B cell (primary cell): ENCODE measurements at regions of chr16 and their contacts with region 1.

Region 1: DNA sequence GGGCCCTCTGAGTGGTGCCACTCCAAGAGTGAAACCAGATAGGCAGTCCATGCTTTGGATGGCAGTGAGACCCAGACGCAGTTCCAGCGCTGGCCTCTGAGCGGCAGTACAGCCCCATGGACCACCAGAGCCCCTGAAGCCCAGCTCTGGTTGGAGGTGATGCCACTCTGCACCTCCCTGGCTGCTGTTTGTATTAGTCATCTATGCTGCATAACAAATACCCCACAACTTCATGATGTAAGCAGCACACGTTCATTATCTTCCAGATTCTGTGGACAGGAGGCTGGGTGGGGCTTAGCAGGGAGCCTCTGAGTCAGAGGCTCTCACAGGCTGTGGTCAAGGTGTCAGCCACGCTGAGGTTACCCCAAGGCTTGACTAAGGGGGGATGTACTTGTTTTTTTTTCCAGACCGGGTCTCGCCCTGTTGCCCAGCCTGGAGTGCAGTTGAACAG is 5.1 kb upstream of the NME4 start:
- DNase-seq: peak; percentile 79
- ATAC-seq: peak; percentile 83
- H3K4me3 ChIP-seq: no peak overlapping the region
- H3K4me3 Mint-ChIP-seq: no peak overlapping the region
- H3K27ac ChIP-seq: no peak overlapping the region
- H3K27ac Mint-ChIP-seq: peak overlapping the region; percentile 38
- H3K4me1 ChIP-seq: peaks cover 13 to 23% of the 10 kb centered on the region in 2 donors
- H3K4me1 Mint-ChIP-seq: peaks cover 16% of the 10 kb centered on the region
- H3K27me3 ChIP-seq: no peaks in the 10 kb centered on the region
- H3K27me3 Mint-ChIP-seq: no peaks in the 10 kb centered on the region
- CTCF ChIP-seq: peak; percentile 82

Region 2: DNA sequence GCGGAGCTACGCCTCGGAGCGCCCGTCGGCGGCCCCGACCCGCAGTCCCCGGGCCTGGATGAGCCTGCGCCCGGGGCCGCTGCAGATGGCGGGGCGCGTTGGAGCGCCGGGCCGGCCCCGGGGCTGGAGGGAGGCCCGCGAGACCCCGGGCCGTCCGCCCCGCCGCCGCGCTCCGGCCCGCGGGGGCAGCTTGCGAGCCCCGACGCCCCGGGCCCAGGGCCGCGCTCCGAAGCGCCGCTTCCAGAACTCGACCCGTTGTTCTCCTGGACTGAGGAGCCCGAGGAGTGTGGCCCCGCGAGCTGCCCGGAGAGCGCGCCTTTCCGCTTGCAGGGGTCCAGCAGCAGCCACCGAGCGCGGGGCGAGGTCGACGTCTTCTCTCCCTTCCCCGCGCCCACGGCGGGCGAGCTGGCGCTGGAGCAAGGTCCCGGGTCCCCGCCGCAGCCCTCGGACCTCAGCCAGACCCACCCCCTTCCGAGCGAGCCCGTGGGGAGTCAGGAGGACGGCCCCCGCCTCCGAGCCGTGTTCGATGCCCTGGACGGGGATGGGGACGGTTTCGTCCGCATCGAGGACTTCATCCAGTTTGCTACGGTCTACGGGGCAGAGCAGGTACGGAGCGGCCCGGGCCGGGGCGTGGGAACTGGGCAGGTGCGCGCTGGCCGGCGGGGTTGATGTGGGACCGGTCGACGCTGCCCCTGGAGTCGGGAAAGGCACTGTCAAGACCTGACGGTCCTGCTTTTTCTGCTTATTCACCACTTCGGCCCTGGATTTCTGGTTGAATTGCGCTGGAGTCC is 34.4 kb after region 1 on chr16:
- CTCF ChIA-PET with region 1: no interaction called
- POLR2A ChIA-PET with region 1: no interaction called
- intact Hi-C with region 1: no loop called
- DNase-seq: peak; percentile 49
- ATAC-seq: no peak
- H3K4me3 ChIP-seq: peak overlapping the region in 4 of 5 experiments; percentile 48 to 71 (median 62)
- H3K4me3 Mint-ChIP-seq: peak overlapping the region; percentile 86
- H3K27ac ChIP-seq: peak overlapping the region in 1 of 2 donors; percentile 20
- H3K27ac Mint-ChIP-seq: peak overlapping the region; percentile 70
- H3K4me1 ChIP-seq: peaks cover 16 to 22% of the 10 kb centered on the region in 2 donors
- H3K4me1 Mint-ChIP-seq: peaks cover 28% of the 10 kb centered on the region
- H3K27me3 ChIP-seq: peaks cover 0 to 14% (median 2%) of the 10 kb centered on the region in 4 experiments
- H3K27me3 Mint-ChIP-seq: peaks cover 4% of the 10 kb centered on the region
- CTCF ChIP-seq: no peak

Region 3: GRCh38 chr16:489606-490005 is 97.7 kb after region 1 on chr16:
- CTCF ChIA-PET with region 1: interaction called, 6 read pairs
- POLR2A ChIA-PET with region 1: no interaction called
- intact Hi-C with region 1: loop called (anchors 5 kb)
- DNase-seq: no peak
- ATAC-seq: no peak
- H3K4me3 ChIP-seq: no peak overlapping the region
- H3K4me3 Mint-ChIP-seq: no peak overlapping the region
- H3K27ac ChIP-seq: no peak overlapping the region
- H3K27ac Mint-ChIP-seq: no peak overlapping the region
- H3K4me1 ChIP-seq: no peaks in the 10 kb centered on the region
- H3K4me1 Mint-ChIP-seq: no peaks in the 10 kb centered on the region
- H3K27me3 ChIP-seq: no peaks in the 10 kb centered on the region
- H3K27me3 Mint-ChIP-seq: no peaks in the 10 kb centered on the region
- CTCF ChIP-seq: no peak

Region 4: GRCh38 chr16:667780-668518 is 276.0 kb after region 1 on chr16 and contains the start of gene RHOT2:
- CTCF ChIA-PET with region 1: no interaction called
- POLR2A ChIA-PET with region 1: no interaction called
- intact Hi-C with region 1: loop called (anchors 5 kb)
- DNase-seq: peak; percentile 95
- ATAC-seq: peak; percentile 99
- H3K4me3 ChIP-seq: peak within 1 kb of the TSS; percentile 23 to 84 (median 73)
- H3K4me3 Mint-ChIP-seq: peak within 1 kb of the TSS; percentile 86
- H3K27ac ChIP-seq: peak within 1 kb of the TSS; percentile 41 to 79
- H3K27ac Mint-ChIP-seq: peak within 1 kb of the TSS; percentile 92
- H3K4me1 ChIP-seq: peaks cover 15 to 25% of the 10 kb centered on the region in 2 donors
- H3K4me1 Mint-ChIP-seq: peaks cover 12% of the 10 kb centered on the region
- H3K27me3 ChIP-seq: no peaks in the 10 kb centered on the region
- H3K27me3 Mint-ChIP-seq: no peaks in the 10 kb centered on the region
- CTCF ChIP-seq: peak; percentile 79
- total RNA-seq, gene RHOT2: 207 and 215 TPM in 2 replicates